Mammary epithelial cell (primary cell): ENCODE measurements at regions of chr6 and their contacts with region 1.

Region 1: GRCh38 chr6:2634139-2634964 is 116.4 kb downstream of the MYLK4 start:
- DNase-seq: peak; percentile 86
- H3K4me3 ChIP-seq: peak overlapping the region; percentile 22 to 53 (median 40)
- H3K27ac ChIP-seq: peak overlapping the region; percentile 55
- H3K4me1 ChIP-seq: peaks cover 30% of the 10 kb centered on the region
- H3K27me3 ChIP-seq: no peaks in the 10 kb centered on the region
- CTCF ChIP-seq: peak; percentile 80 to 99

Region 2: DNA sequence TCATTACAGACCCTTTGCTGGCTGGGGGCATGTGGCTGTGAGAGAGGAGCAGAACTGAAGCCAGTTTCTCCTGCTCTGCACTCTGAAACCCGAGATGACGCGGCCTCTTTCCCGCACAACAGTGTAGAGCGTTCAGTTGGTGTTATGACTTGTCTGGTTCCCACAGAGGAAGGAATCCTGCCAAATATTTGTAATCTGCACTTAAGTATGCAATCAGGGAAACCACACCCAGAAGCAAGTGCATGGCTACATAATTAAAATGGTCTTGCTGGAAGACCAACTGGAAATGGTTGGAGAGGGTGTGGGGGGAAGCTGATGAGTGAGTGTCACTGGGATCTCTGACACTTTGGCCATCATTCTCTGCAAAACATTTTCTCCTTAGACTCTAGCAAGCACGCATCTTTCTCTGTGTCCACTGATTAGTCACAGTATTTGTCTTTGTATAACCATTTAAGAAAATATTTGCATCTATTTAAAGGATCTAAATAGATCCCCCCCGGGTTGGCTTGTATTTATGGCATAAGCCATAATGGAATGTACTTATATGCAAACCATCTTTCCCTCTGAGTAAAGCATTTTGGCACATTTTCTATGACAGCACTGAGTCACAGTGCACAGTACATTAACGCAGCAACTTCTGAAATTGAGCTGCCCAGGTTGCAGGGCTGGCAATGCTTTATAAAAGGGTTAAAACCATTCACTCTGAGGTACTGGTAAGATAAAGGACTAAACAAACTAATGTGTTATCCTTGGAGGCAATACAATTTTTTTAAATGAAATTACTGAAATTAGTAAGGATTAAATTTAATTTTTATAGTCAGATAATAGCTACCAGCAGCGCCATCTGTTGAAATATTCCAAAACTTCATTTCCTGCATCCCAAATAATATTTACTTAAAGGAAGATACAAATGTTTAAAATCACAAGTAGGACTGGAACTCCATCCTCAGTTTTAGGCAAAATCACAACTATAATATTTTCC is 947.9 kb before region 1 on chr6:
- CTCF ChIA-PET with region 1: no interaction called
- dilution Hi-C with region 1: no loop called
- in situ Hi-C with region 1: no loop called
- intact Hi-C with region 1: loop called (anchors 1 kb)
- DNase-seq: peak; percentile 96
- H3K4me3 ChIP-seq: no peak overlapping the region
- H3K27ac ChIP-seq: peak overlapping the region; percentile 87
- H3K4me1 ChIP-seq: peaks cover 36% of the 10 kb centered on the region
- H3K27me3 ChIP-seq: no peaks in the 10 kb centered on the region
- CTCF ChIP-seq: peak; percentile 32 to 45

Region 3: DNA sequence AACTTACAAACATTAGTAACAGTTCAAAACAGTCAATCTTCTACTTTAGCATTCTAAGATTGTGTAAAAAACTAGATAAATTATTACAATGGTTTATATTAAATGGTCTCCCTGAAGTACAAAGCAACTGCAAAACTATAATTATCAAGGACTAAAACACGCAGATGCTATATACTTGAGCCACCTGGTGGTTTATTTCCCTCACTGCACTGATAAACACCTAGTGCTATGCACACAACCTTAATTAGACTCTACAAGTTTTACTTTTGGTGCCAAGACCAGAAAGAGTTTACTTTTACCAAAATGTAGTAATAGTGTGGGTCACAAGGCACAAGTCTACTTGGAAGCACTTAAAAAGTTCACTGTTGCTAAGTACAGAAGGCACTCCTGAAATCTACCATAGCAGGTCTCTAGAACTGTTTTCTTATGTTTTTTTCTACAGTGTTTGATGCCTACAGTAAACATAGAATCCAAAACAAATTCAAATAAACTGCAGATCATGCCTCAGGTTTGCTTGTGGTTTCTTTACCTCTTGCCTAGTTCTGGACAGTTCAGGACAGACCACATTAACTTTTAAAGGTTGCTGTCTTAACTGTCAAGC is 438.2 kb before region 1 on chr6:
- CTCF ChIA-PET with region 1: no interaction called
- dilution Hi-C with region 1: no loop called
- in situ Hi-C with region 1: no loop called
- intact Hi-C with region 1: loop called (anchors 2 kb)
- DNase-seq: peak; percentile 40
- H3K4me3 ChIP-seq: no peak overlapping the region
- H3K27ac ChIP-seq: no peak overlapping the region
- H3K4me1 ChIP-seq: peaks cover 12% of the 10 kb centered on the region
- H3K27me3 ChIP-seq: no peaks in the 10 kb centered on the region
- CTCF ChIP-seq: peak; percentile 74 to 84

Region 4: DNA sequence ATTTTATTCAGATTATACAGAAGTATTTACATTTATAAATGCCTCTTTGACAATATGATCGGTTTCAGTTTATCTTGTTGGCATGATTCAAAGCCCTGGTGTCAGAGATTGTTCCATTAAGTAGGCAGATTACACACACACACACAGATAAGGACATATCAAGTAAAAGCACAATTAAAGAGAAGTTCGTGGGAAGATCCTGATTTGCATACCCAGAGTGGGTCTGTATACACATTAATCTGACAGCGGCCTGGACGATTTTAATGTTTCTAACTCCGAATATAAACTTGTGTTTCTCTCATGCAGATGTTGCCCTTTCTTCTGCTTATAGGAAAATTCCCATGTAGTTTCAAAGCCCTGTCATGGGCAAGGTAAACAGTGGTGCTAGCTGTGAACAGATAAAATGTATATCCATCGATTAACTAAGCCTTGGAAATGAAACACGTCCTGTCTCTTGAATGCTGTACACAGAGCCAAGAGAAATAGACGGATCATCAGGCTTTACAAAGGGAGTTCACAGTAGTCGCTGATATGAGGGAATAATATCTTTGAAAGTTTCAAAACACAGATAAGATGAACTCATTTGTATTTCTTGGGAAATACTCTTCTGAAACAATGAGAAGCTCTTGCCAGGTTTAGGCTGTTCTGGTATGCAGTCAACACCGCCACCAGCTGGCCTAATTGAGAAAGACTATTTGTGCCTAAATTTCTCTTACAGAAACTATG is 280.8 kb before region 1 on chr6:
- CTCF ChIA-PET with region 1: interaction called, 4 read pairs
- dilution Hi-C with region 1: no loop called
- in situ Hi-C with region 1: loop called in 1 of 2 experiments (anchors 25 kb)
- intact Hi-C with region 1: loop called (anchors 1 kb)
- DNase-seq: peak; percentile 61
- H3K4me3 ChIP-seq: no peak overlapping the region
- H3K27ac ChIP-seq: no peak overlapping the region
- H3K4me1 ChIP-seq: no peaks in the 10 kb centered on the region
- H3K27me3 ChIP-seq: no peaks in the 10 kb centered on the region
- CTCF ChIP-seq: peak; percentile 78 to 80

Region 5: DNA sequence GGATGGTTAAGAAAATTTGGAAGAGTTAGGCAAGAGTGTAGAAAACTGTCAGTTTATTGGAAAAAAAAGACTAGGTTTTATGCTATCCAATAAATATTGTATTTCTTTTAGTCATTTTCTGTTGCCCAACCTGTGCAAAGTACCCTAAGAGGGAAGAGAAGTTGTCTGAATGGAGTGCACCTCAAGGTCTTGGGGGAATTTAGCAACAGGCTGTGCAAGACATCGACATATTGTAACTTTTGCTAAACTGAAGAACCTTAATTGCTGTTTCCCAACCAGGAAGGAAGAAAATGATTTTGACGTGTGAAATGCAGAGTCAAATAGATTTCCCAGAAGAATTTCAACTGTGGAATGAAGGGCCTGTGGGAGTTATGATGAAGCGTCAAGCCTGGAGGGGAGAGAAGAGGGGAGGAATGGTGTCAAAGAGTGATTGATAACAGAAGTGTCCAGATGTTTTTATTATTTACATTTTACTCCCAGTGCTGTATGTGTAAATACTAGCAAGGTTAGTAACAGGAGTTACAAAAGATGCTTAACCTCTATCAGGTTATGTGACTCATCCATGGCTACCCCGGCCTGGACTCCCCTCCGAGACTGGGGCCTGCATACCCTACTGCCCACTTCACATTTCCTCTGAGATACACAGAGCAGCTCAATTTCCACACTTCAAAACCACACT is 130.4 kb before region 1 on chr6:
- CTCF ChIA-PET with region 1: no interaction called
- dilution Hi-C with region 1: no loop called
- in situ Hi-C with region 1: no loop called
- intact Hi-C with region 1: loop called (anchors 5 kb)
- DNase-seq: peak; percentile 47
- H3K4me3 ChIP-seq: no peak overlapping the region
- H3K27ac ChIP-seq: no peak overlapping the region
- H3K4me1 ChIP-seq: peaks cover 31% of the 10 kb centered on the region
- H3K27me3 ChIP-seq: no peaks in the 10 kb centered on the region
- CTCF ChIP-seq: no peak

Region 6: DNA sequence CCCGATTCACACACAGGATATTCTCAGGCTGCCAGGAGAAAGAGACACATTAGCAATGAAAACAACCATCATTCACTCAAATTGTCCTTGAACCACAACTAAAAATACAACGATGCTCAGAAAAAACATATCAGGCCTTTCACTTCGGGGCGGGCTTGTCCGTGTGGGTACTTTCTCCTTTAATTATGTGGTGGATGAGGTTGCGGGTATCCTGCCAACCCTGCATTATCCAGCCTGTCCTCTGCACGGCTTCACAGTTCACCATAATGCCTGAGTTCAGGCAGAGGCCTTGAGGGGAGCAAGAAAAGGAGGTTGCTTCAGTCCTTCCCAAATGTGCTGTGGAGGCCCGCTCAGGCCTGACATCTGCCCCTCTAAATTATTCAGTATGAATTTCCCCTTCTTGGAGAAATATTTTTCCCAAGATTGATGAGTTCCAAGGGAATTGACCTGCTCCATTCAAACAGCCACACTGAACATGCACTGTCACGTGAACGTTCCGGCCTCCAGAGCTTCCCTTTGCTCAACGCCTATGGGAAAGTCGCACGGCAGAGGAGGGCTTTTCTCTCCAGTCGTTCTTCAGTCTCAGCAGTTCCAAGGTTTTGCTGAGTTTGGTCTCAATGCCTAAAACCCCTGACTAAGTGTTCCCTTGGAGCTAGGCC is 46.0 kb after region 1 on chr6:
- CTCF ChIA-PET with region 1: no interaction called
- dilution Hi-C with region 1: no loop called
- in situ Hi-C with region 1: no loop called
- intact Hi-C with region 1: no loop called
- DNase-seq: no peak
- H3K4me3 ChIP-seq: no peak overlapping the region
- H3K27ac ChIP-seq: no peak overlapping the region
- H3K4me1 ChIP-seq: no peaks in the 10 kb centered on the region
- H3K27me3 ChIP-seq: no peaks in the 10 kb centered on the region
- CTCF ChIP-seq: no peak

Region 7: GRCh38 chr6:2876210-2877056 is 242.1 kb after region 1 on chr6:
- CTCF ChIA-PET with region 1: no interaction called
- dilution Hi-C with region 1: no loop called
- in situ Hi-C with region 1: no loop called
- intact Hi-C with region 1: no loop called
- DNase-seq: peak; percentile 90
- H3K4me3 ChIP-seq: peak overlapping the region in 1 of 3 experiments; percentile 16
- H3K27ac ChIP-seq: peak overlapping the region; percentile 77
- H3K4me1 ChIP-seq: peaks cover 29% of the 10 kb centered on the region
- H3K27me3 ChIP-seq: no peaks in the 10 kb centered on the region
- CTCF ChIP-seq: no peak